Transverse colon (tissue), 4 donors: ENCODE measurements at regions of chr4 and their contacts with region 1.

Region 1: DNA sequence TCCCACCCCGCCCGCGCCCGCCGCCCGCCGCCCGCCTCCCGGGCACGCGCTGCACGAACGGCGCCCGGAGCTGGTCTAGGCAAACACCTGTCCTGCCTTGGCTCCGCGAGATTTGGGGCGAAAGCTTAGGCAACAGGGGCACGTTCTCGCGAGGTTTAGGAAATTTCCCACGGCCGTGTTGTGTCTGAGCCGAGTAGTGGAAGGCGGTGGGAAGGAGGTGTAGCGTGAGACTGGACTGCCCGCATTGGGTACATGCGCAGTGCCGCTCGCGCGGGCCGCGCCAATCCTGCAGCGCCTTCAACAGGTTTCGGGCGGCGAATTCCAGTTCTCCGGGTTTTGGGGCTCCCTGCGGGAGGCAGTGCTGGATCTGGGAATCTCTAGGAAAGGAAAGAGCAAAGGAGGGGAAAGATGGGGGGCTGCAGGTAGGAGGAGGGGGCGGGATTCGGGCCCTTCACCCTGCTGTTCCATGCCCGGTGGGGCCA is 1.3 kb upstream of the RBPJ start:
- DNase-seq: peak; percentile 99
- H3K4me3 ChIP-seq: peak overlapping the region; percentile 70 to 77 (median 73)
- H3K27ac ChIP-seq: peak overlapping the region; percentile 90 to 97 (median 96)
- H3K4me1 ChIP-seq: peaks cover 0 to 29% (median 16%) of the 10 kb centered on the region in 4 donors
- H3K27me3 ChIP-seq: no peaks in the 10 kb centered on the region
- CTCF ChIP-seq: peak in 1 of 5 experiments; percentile 8
- EP300 ChIP-seq: no peak
- POLR2A ChIP-seq: no peak

Region 2: GRCh38 chr4:25834411-25835107 is 484.9 kb before region 1 on chr4:
- in situ Hi-C with region 1: no loop called
- intact Hi-C with region 1: no loop called
- DNase-seq: no peak
- H3K4me3 ChIP-seq: no peak overlapping the region
- H3K27ac ChIP-seq: peak overlapping the region in 1 of 4 donors; percentile 30
- H3K4me1 ChIP-seq: no peaks in the 10 kb centered on the region
- H3K27me3 ChIP-seq: no peaks in the 10 kb centered on the region
- CTCF ChIP-seq: no peak
- EP300 ChIP-seq: no peak
- POLR2A ChIP-seq: no peak

Region 3: GRCh38 chr4:26028793-26029567 is 290.5 kb before region 1 on chr4:
- in situ Hi-C with region 1: no loop called
- intact Hi-C with region 1: loop called (anchors 5 kb)
- DNase-seq: peak; percentile 71
- H3K4me3 ChIP-seq: peak overlapping the region in 1 of 4 donors; percentile 20
- H3K27ac ChIP-seq: peak overlapping the region in 2 of 4 donors; percentile 2 to 3
- H3K4me1 ChIP-seq: peaks cover 0 to 12% (median 3%) of the 10 kb centered on the region in 4 donors
- H3K27me3 ChIP-seq: no peaks in the 10 kb centered on the region
- CTCF ChIP-seq: peak; percentile 57 to 75 (median 71)
- EP300 ChIP-seq: no peak
- POLR2A ChIP-seq: no peak

Region 4: DNA sequence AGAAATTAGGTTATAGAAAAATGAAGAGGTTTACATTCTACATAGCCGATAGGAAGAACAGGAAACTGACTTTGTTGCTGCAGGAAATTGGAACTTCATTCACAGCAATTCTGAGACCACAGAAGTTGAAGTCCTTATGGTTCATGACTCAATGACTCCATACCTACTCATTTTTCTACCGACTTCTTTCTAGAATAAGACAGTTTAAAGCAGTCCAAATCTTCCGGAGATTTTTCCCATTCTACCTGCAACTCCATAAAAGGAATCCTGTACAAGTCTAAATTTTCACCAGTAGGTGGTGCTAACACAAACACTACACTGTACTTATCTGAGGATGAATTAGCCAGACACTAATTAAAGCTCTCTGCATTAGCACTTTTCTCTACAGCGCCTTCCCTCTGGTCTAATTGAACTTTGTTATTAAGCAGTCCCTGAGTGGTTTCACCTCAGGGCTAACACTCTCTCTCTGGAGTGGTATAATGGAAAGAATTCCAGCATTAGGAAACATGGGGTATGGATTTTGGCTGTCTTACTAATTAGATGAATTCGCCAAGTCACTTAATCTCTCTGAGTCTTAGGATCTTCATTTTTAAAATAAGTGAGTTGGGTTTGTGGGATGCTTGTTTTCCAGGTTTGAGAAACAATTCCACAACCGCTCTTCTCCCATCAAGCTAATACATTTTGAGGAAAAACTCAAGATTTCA is 237.6 kb before region 1 on chr4:
- in situ Hi-C with region 1: loop called in 3 of 4 experiments (anchors 10 to 25 kb)
- intact Hi-C with region 1: no loop called
- DNase-seq: no peak
- H3K4me3 ChIP-seq: no peak overlapping the region
- H3K27ac ChIP-seq: no peak overlapping the region
- H3K4me1 ChIP-seq: peaks cover 0 to 9% (median 3%) of the 10 kb centered on the region in 4 donors
- H3K27me3 ChIP-seq: no peaks in the 10 kb centered on the region
- CTCF ChIP-seq: peak; percentile 65 to 79 (median 73)
- EP300 ChIP-seq: no peak
- POLR2A ChIP-seq: no peak